ENCODE measurements at regions of chr12 and their contacts with region 1.

Region 1: DNA sequence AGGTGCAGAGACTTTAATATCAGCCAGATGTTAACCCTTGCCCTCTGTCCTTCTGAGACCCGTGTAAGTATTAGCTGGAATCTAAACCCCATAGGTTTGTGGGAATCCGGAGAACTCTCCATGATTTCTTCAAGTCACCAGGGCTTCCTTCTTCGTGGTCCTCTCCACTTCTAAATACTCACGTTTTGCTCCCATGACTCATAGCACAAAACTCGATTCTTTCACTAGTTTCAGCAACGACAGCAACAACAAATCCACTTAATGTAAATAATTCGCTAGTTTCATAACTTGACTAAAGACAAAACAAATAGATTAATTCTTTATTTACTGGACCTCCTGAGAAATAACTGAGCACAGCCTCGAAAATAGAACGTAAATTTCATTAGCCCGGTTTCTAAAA is 4.4 kb upstream of the CLEC2A start:
- DNase-seq: no peak
- ATAC-seq: no peak
- H3K4me3 ChIP-seq: no peak overlapping the region
- H3K4me1 ChIP-seq: peaks cover 6% of the 10 kb centered on the region
- CTCF ChIP-seq: no peak

Region 2: GRCh38 chr12:9813821-9814809 is 122.5 kb before region 1 on chr12:
- intact Hi-C with region 1: loop called in 1 of 2 experiments (anchors 5 kb)
- DNase-seq: peak; percentile 84 to 86 (median 85)
- ATAC-seq: peak; percentile 98
- H3K4me3 ChIP-seq: no peak overlapping the region
- H3K4me1 ChIP-seq: no peaks in the 10 kb centered on the region
- CTCF ChIP-seq: peak; percentile 75

Measured in mucosa of descending colon (tissue), 3 donors.